Activated naive CD4-positive, alpha-beta T cell treated with anti-CD3 and anti-CD28 coated beads, Interleukin-2, amount 10 ng/mL, durations not matched to agents 7 days and 5 days (primary cell): ENCODE measurements at regions of chr15 and their contacts with region 1.

Region 1: DNA sequence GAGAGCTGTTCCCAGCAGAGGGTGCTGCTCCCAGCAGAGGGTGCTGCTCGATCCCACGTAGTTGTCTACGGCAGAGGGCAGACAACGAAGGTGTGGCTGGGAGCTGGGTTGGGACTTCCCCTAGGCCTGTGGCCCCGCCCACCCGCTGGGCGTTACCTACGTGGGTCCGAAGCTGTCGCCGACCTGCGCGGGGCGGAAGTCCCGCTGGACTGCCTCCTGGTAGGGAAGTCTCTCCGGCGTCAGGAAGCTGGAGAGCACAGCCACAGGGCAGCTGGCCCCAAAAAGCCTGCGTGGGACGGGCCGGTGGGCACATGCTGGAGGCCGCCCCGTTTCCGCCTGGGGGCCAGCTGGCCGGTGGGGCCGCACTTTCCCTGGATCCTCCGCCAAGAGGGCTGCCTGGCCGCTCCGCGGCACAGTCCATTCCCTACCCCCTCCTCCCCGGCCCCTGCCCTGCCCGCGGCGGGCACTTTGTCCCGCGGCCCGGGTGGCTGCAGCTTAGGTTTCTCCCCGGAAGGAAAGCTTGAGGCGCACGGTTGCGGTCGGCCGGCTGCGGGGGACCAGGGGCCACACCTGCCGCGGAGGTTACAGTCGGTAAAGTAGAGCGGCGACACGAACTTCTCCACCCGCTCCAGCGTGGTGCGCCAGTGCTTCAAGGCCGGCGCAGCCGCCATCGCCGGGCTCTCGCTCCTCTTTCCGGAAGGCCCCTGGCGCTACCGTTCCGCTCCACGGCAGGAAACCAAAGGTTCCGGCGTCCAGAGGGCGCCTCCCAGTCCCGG is at the start of gene MAN2C1:
- DNase-seq: peak; percentile 96
- H3K4me3 Mint-ChIP-seq: peak within 1 kb of the TSS; percentile 88
- H3K27ac Mint-ChIP-seq: peak within 1 kb of the TSS; percentile 97
- H3K4me1 Mint-ChIP-seq: peaks cover 30% of the 10 kb centered on the region
- H3K27me3 Mint-ChIP-seq: peaks cover 3% of the 10 kb centered on the region

Region 2: GRCh38 chr15:75354454-75354853 is 13.6 kb before region 1 on chr15:
- CTCF ChIA-PET with region 1: interaction called, 13 read pairs
- DNase-seq: no peak
- H3K4me3 Mint-ChIP-seq: no peak overlapping the region
- H3K27ac Mint-ChIP-seq: no peak overlapping the region
- H3K4me1 Mint-ChIP-seq: peaks cover 19% of the 10 kb centered on the region
- H3K27me3 Mint-ChIP-seq: peaks cover 6% of the 10 kb centered on the region

Region 3: GRCh38 chr15:75597667-75598341 is 229.7 kb after region 1 on chr15:
- CTCF ChIA-PET with region 1: interaction called, 18 read pairs
- DNase-seq: peak; percentile 77
- H3K4me3 Mint-ChIP-seq: peak overlapping the region; percentile 56
- H3K27ac Mint-ChIP-seq: peak overlapping the region; percentile 90
- H3K4me1 Mint-ChIP-seq: peaks cover 42% of the 10 kb centered on the region
- H3K27me3 Mint-ChIP-seq: no peaks in the 10 kb centered on the region

Region 4: GRCh38 chr15:75647370-75648155 is 279.5 kb after region 1 on chr15 and contains the start of gene SNX33:
- CTCF ChIA-PET with region 1: interaction called, 53 read pairs
- DNase-seq: peak; percentile 71
- H3K4me3 Mint-ChIP-seq: peak within 1 kb of the TSS; percentile 84
- H3K27ac Mint-ChIP-seq: peak within 1 kb of the TSS; percentile 64
- H3K4me1 Mint-ChIP-seq: peaks cover 25% of the 10 kb centered on the region
- H3K27me3 Mint-ChIP-seq: peaks cover 61% of the 10 kb centered on the region

Region 5: GRCh38 chr15:75684642-75685041 is 316.5 kb after region 1 on chr15:
- CTCF ChIA-PET with region 1: interaction called, 62 read pairs
- DNase-seq: no peak
- H3K4me3 Mint-ChIP-seq: no peak overlapping the region
- H3K27ac Mint-ChIP-seq: no peak overlapping the region
- H3K4me1 Mint-ChIP-seq: no peaks in the 10 kb centered on the region
- H3K27me3 Mint-ChIP-seq: peaks cover 16% of the 10 kb centered on the region